Naive thymus-derived CD4-positive, alpha-beta T cell (primary cell): ENCODE measurements at regions of chr11 and their contacts with region 1.

Region 1: DNA sequence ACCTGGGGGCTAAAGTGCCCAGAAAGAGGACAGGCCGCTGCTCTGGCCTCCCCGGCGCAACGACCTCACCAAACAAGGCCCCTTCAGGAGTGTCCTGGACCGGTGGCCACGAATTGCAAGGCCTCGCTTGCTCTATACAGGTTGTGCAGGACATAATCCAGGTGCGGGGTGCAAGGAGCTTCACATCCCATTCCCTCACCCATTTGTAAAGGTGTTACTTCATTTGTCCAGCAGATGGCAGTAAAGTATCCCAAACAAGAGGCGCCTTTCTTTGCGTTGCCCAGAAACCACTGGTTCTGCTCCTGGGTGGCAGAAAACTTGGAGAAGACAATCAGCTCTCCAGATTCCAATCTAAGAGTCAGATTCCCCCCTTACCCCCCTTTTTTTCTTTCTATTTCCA is 35.9 kb upstream of the PRDM11 start:
- DNase-seq: peak in 7 of 9 donors; percentile 41 to 73 (median 59)
- ATAC-seq: peak; percentile 78
- H3K4me3 ChIP-seq: no peak overlapping the region
- H3K4me3 Mint-ChIP-seq: no peak overlapping the region
- H3K27ac ChIP-seq: no peak overlapping the region
- H3K27ac Mint-ChIP-seq: no peak overlapping the region
- H3K4me1 ChIP-seq: no peaks in the 10 kb centered on the region
- H3K4me1 Mint-ChIP-seq: no peaks in the 10 kb centered on the region
- H3K27me3 ChIP-seq: peaks cover 3 to 5% of the 10 kb centered on the region in 2 donors
- H3K27me3 Mint-ChIP-seq: peaks cover 25 to 55% (median 43%) of the 10 kb centered on the region in 5 donors

Region 2: GRCh38 chr11:45233121-45233803 is 122.7 kb after region 1 on chr11:
- CTCF ChIA-PET with region 1: no interaction called
- POLR2A ChIA-PET with region 1: no interaction called
- intact Hi-C with region 1: loop called in 1 of 2 experiments (anchors 2 kb)
- DNase-seq: peak in 8 of 9 donors; percentile 16 to 53 (median 32)
- ATAC-seq: peak; percentile 82
- H3K4me3 ChIP-seq: no peak overlapping the region
- H3K4me3 Mint-ChIP-seq: no peak overlapping the region
- H3K27ac ChIP-seq: no peak overlapping the region
- H3K27ac Mint-ChIP-seq: no peak overlapping the region
- H3K4me1 ChIP-seq: no peaks in the 10 kb centered on the region
- H3K4me1 Mint-ChIP-seq: peaks cover 0 to 3% (median 0%) of the 10 kb centered on the region in 7 donors
- H3K27me3 ChIP-seq: no peaks in the 10 kb centered on the region
- H3K27me3 Mint-ChIP-seq: peaks cover 3 to 19% (median 15%) of the 10 kb centered on the region in 5 donors

Region 3: DNA sequence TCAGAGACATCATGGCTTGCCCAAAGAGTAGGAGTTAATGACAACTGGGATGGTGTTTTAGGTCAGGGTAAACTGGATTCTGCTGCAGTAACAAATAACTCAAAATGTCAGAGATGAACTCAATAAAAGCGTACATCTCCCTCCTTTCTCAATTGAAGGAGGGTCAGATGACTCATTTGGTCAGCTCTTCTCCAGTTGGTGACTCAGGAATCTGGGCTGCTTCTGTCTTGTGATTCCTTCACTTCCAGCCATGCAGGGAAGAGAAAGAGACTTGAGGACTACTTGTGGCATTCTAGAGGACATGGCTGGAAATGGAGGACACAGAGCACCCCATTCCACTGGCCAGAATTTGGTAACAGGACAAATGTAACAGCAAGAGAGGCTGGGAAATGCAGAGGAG is 178.8 kb after region 1 on chr11:
- CTCF ChIA-PET with region 1: interaction called, 23 read pairs
- POLR2A ChIA-PET with region 1: no interaction called
- intact Hi-C with region 1: loop called (anchors 1 kb)
- DNase-seq: no peak
- ATAC-seq: no peak
- H3K4me3 ChIP-seq: no peak overlapping the region
- H3K4me3 Mint-ChIP-seq: no peak overlapping the region
- H3K27ac ChIP-seq: no peak overlapping the region
- H3K27ac Mint-ChIP-seq: no peak overlapping the region
- H3K4me1 ChIP-seq: no peaks in the 10 kb centered on the region
- H3K4me1 Mint-ChIP-seq: peaks cover 0 to 4% (median 0%) of the 10 kb centered on the region in 7 donors
- H3K27me3 ChIP-seq: peaks cover 5 to 8% of the 10 kb centered on the region in 2 donors
- H3K27me3 Mint-ChIP-seq: peaks cover 79 to 86% (median 84%) of the 10 kb centered on the region in 5 donors

Region 4: GRCh38 chr11:45298718-45299117 is 188.2 kb after region 1 on chr11:
- CTCF ChIA-PET with region 1: interaction called, 10 read pairs
- POLR2A ChIA-PET with region 1: no interaction called
- intact Hi-C with region 1: loop called (anchors 1 kb)
- DNase-seq: no peak
- ATAC-seq: no peak
- H3K4me3 ChIP-seq: no peak overlapping the region
- H3K4me3 Mint-ChIP-seq: no peak overlapping the region
- H3K27ac ChIP-seq: no peak overlapping the region
- H3K27ac Mint-ChIP-seq: no peak overlapping the region
- H3K4me1 ChIP-seq: no peaks in the 10 kb centered on the region
- H3K4me1 Mint-ChIP-seq: no peaks in the 10 kb centered on the region
- H3K27me3 ChIP-seq: no peaks in the 10 kb centered on the region
- H3K27me3 Mint-ChIP-seq: peaks cover 6 to 23% (median 22%) of the 10 kb centered on the region in 5 donors

Region 5: DNA sequence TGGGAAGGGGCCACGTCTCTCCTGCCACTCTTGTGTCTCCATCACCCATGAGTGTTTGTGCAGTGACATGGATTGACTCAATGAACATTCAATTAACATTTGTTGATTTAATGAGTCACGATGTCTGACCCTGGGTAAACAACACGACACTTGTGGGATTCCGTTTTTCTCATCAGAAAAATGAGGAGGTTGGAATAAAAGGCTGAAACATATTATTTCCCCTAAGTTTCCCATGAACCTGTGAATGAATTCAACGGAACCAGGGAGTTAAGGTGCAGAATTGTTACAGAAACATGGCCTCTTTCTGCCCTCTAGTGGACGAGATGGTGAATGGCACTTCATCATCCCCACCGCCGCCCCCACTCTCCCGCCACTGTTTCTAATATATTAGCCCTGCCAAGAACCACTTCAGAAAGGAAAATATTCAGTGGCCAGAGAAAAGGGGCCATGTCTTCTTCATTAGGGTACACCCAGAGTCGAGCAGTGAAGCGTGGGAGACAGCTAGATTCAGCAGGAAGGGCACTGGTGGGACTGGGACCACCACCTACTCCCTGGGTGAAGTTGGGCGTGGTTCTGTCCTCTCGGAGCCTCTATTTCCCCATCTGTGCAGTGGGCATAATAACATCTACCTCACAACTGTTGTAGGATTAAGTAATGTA is 221.8 kb after region 1 on chr11:
- CTCF ChIA-PET with region 1: interaction called, 95 read pairs
- POLR2A ChIA-PET with region 1: no interaction called
- intact Hi-C with region 1: loop called (anchors 1 kb)
- DNase-seq: peak in 6 of 9 donors; percentile 7 to 47 (median 38)
- ATAC-seq: peak; percentile 65
- H3K4me3 ChIP-seq: no peak overlapping the region
- H3K4me3 Mint-ChIP-seq: no peak overlapping the region
- H3K27ac ChIP-seq: no peak overlapping the region
- H3K27ac Mint-ChIP-seq: no peak overlapping the region
- H3K4me1 ChIP-seq: no peaks in the 10 kb centered on the region
- H3K4me1 Mint-ChIP-seq: peaks cover 0 to 5% (median 0%) of the 10 kb centered on the region in 7 donors
- H3K27me3 ChIP-seq: no peaks in the 10 kb centered on the region
- H3K27me3 Mint-ChIP-seq: peaks cover 14 to 21% (median 16%) of the 10 kb centered on the region in 5 donors

Region 6: DNA sequence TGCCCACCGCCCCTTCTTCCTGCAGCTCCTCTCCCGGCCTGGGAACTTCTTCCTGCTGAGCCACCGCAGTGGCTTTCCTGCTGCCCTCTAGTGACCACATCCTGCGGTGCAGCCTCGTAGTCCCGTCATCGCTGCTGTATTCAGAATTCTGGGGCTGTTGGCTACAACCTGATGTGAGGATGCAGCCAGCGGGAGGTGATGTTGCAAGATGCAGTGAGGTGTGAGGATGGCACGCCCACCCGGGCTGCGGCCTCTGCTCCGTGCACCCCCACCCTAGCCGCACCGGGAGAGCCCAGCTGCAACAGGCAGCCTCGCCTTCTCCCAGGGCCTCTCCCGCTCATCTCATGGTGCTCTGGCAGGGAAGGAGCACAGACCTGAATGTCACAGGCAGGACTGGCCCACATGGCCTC is 544.8 kb after region 1 on chr11:
- CTCF ChIA-PET with region 1: no interaction called
- POLR2A ChIA-PET with region 1: no interaction called
- intact Hi-C with region 1: loop called in 1 of 2 experiments (anchors 10 kb)
- DNase-seq: peak in 7 of 9 donors; percentile 21 to 66 (median 37)
- ATAC-seq: peak; percentile 73
- H3K4me3 ChIP-seq: no peak overlapping the region
- H3K4me3 Mint-ChIP-seq: peak overlapping the region in 1 of 10 donors; percentile 74
- H3K27ac ChIP-seq: no peak overlapping the region
- H3K27ac Mint-ChIP-seq: peak overlapping the region in 1 of 9 donors; percentile 57
- H3K4me1 ChIP-seq: peaks cover 0 to 6% of the 10 kb centered on the region in 2 donors
- H3K4me1 Mint-ChIP-seq: peaks cover 0 to 13% (median 7%) of the 10 kb centered on the region in 7 donors
- H3K27me3 ChIP-seq: peaks cover 0 to under 1% of the 10 kb centered on the region in 2 donors
- H3K27me3 Mint-ChIP-seq: peaks cover 12 to 49% (median 24%) of the 10 kb centered on the region in 5 donors